GM12878 (cell line): ENCODE measurements at regions of chr6 and their contacts with region 1.

Region 1: GRCh38 chr6:4055420-4056041 is 23.4 kb downstream of the FAM217A start:
- DNase-seq: no peak
- ATAC-seq: no peak
- H3K4me3 ChIP-seq: no peak overlapping the region
- H3K27ac ChIP-seq: no peak overlapping the region
- H3K4me1 ChIP-seq: no peaks in the 10 kb centered on the region
- H3K27me3 ChIP-seq: no peaks in the 10 kb centered on the region
- CTCF ChIP-seq: peak in 2 of 3 experiments; percentile 19 to 33; a peak in 1 of 6 replicates
- EP300 ChIP-seq: no peak
- POLR2A ChIP-seq: no peak
- RAD21 ChIP-seq: peak; percentile 25; the same call in 1 of the 2 replicates

Region 2: DNA sequence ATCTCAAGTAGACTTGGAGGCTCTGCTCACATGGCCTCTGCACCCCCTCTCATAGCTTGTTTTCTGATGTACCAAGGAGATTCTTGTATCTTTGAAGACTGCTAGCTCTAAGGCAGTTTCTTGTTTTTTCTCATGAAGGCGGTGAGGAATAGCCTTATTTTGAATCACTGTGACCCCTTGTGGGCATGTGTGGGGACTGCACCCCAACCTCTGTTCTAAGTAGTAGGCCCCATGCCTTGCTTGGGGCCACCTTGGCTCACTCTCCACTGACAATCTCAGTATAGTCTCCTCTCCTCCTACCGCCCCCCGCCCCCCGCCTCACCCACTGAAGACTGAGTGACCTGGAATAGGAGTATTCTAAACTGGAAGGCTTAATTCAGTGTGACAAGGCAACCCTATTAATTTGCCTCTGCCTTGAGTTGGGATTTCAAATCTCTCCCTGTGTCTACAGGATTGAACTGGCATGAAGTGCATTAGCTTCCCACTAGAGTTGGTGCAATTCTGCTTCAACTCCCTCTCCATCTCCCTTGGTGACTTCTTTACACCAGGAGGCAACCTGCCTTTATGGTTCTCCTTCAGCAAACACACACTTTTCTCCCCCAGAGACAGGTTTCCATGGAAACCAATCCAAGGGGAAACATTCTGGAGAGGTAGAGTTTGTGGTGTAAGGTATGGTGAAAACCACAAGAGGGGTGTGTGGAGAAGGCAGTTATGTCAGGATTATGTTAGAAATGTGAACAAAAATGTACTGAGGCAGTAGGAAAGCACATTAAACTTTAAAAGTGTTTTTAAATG is 155.3 kb after region 1 on chr6:
- CTCF ChIA-PET with region 1: interaction called, 10 read pairs
- POLR2A ChIA-PET with region 1: no interaction called
- RAD21 ChIA-PET with region 1: interaction called, 4 read pairs
- SMC1A ChIA-PET with region 1: interaction called, 7 read pairs
- in situ Hi-C with region 1: no loop called
- intact Hi-C with region 1: no loop called
- DNase-seq: no peak
- ATAC-seq: peak; percentile 93
- H3K4me3 ChIP-seq: no peak overlapping the region
- H3K27ac ChIP-seq: no peak overlapping the region
- H3K4me1 ChIP-seq: no peaks in the 10 kb centered on the region
- H3K27me3 ChIP-seq: no peaks in the 10 kb centered on the region
- CTCF ChIP-seq: peak; percentile 62 to 73 (median 69)
- EP300 ChIP-seq: no peak
- POLR2A ChIP-seq: no peak
- RAD21 ChIP-seq: peak; percentile 64

Region 3: DNA sequence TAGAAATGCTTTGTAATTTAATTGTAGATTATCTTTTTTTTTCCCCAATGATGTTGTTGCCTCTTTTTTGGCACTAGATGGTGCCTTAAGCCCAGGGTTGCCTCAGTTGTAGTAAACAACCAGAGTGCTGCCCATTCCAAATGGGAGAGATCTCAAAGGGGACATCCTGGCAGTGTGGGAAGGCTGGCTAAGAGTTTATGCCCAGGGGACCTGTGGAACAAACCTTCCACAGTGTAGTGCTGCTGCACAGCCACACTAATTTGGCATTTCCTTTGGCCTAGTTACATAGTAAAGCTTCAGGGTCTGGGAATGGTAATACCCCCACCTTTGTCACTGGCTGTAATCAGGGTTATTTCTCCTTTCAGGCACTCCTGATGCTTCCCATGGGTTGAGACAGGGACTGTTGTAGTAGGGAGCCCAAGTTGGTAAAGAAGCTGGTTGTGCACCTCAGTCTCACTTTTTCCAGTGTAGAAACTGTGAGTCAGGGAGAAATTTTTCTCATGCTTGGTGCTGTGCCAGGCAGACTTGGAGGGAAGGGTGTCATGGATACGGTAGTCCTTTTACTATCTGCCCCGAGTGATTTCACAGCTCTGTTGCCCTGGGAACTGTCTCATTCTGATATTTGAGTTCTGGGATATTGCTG is 257.6 kb after region 1 on chr6:
- CTCF ChIA-PET with region 1: no interaction called
- POLR2A ChIA-PET with region 1: no interaction called
- RAD21 ChIA-PET with region 1: no interaction called
- SMC1A ChIA-PET with region 1: no interaction called
- in situ Hi-C with region 1: no loop called
- intact Hi-C with region 1: no loop called
- DNase-seq: no peak
- ATAC-seq: no peak
- H3K4me3 ChIP-seq: no peak overlapping the region
- H3K27ac ChIP-seq: no peak overlapping the region
- H3K4me1 ChIP-seq: no peaks in the 10 kb centered on the region
- H3K27me3 ChIP-seq: no peaks in the 10 kb centered on the region
- CTCF ChIP-seq: peak; percentile 5 to 27 (median 10); a peak in 3 of 6 replicates
- EP300 ChIP-seq: no peak
- POLR2A ChIP-seq: no peak
- RAD21 ChIP-seq: peak; percentile 43

Region 4: GRCh38 chr6:4446982-4447381 is 391.5 kb after region 1 on chr6:
- CTCF ChIA-PET with region 1: no interaction called
- POLR2A ChIA-PET with region 1: no interaction called
- RAD21 ChIA-PET with region 1: no interaction called
- SMC1A ChIA-PET with region 1: no interaction called
- in situ Hi-C with region 1: no loop called
- intact Hi-C with region 1: no loop called
- DNase-seq: no peak
- ATAC-seq: no peak
- H3K4me3 ChIP-seq: no peak overlapping the region
- H3K27ac ChIP-seq: no peak overlapping the region
- H3K4me1 ChIP-seq: no peaks in the 10 kb centered on the region
- H3K27me3 ChIP-seq: no peaks in the 10 kb centered on the region
- CTCF ChIP-seq: no peak
- EP300 ChIP-seq: no peak
- POLR2A ChIP-seq: no peak
- RAD21 ChIP-seq: no peak